B cell (primary cell): ENCODE measurements at regions of chr4 and their contacts with region 1.

Region 1: GRCh38 chr4:129362674-129363274 is 266.8 kb downstream of the C4orf33 start:
- DNase-seq: peak; percentile 56
- ATAC-seq: no peak
- H3K4me3 ChIP-seq: no peak overlapping the region
- H3K4me3 Mint-ChIP-seq: no peak overlapping the region
- H3K27ac ChIP-seq: no peak overlapping the region
- H3K27ac Mint-ChIP-seq: no peak overlapping the region
- H3K4me1 ChIP-seq: no peaks in the 10 kb centered on the region
- H3K4me1 Mint-ChIP-seq: no peaks in the 10 kb centered on the region
- H3K27me3 ChIP-seq: no peaks in the 10 kb centered on the region
- H3K27me3 Mint-ChIP-seq: no peaks in the 10 kb centered on the region
- CTCF ChIP-seq: peak; percentile 90

Region 2: GRCh38 chr4:129641179-129641578 is 278.4 kb after region 1 on chr4:
- CTCF ChIA-PET with region 1: interaction called, 15 read pairs
- POLR2A ChIA-PET with region 1: no interaction called
- intact Hi-C with region 1: no loop called
- DNase-seq: peak; percentile 35
- ATAC-seq: no peak
- H3K4me3 ChIP-seq: no peak overlapping the region
- H3K4me3 Mint-ChIP-seq: no peak overlapping the region
- H3K27ac ChIP-seq: no peak overlapping the region
- H3K27ac Mint-ChIP-seq: no peak overlapping the region
- H3K4me1 ChIP-seq: no peaks in the 10 kb centered on the region
- H3K4me1 Mint-ChIP-seq: no peaks in the 10 kb centered on the region
- H3K27me3 ChIP-seq: no peaks in the 10 kb centered on the region
- H3K27me3 Mint-ChIP-seq: no peaks in the 10 kb centered on the region
- CTCF ChIP-seq: peak; percentile 77